H1 (cell line): ENCODE measurements at regions of chr4 and their contacts with region 1.

Region 1: DNA sequence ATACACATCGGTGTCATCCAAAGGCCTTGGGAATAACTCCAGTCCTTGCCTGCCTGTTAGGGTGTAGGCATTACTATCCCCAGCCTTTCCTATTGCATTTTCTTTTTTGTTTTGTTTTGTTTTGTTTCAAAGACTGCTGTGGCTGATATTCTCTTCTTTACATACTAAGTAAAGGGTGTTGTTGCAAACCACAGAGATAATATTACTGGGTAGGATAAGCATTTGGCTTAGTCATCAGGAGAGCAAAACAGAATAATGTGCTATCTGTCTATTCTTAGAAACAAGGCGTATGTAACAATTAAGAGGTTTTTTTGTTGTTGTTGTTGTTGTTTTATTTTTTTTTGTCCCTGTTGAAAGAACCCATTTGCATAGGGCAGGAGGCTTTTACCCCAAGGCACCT is 41.8 kb downstream of the UGT2B28 start:
- DNase-seq: no peak
- H3K4me3 ChIP-seq: no peak overlapping the region
- H3K27ac ChIP-seq: no peak overlapping the region
- H3K4me1 ChIP-seq: no peaks in the 10 kb centered on the region
- H3K27me3 ChIP-seq: no peaks in the 10 kb centered on the region
- CTCF ChIP-seq: no peak
- EP300 ChIP-seq: no peak
- POLR2A ChIP-seq: no peak
- RAD21 ChIP-seq: no peak

Region 2: GRCh38 chr4:69167300-69167699 is 154.8 kb before region 1 on chr4:
- CTCF ChIA-PET with region 1: no interaction called
- POLR2A ChIA-PET with region 1: no interaction called
- DNase-seq: no peak
- H3K4me3 ChIP-seq: no peak overlapping the region
- H3K27ac ChIP-seq: no peak overlapping the region
- H3K4me1 ChIP-seq: no peaks in the 10 kb centered on the region
- H3K27me3 ChIP-seq: no peaks in the 10 kb centered on the region
- CTCF ChIP-seq: no peak
- EP300 ChIP-seq: no peak
- POLR2A ChIP-seq: no peak
- RAD21 ChIP-seq: no peak

Region 3: DNA sequence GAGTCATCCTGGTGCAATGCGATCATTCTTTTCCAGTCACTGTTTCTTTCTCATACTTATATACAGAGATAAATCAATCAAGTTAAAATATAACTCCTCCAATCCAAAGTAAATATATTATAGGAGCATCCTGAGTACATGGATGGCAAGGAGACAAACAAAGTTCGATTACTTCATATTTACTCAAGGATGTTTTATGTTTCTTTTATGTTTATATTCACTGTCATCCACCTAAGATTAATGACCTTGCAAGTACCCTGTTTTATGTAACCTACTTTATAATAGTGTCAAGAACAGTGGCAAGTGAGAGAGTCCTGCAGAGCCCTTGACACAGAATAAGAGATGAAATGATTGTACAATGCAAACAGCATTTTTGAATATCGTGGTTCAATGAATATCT is 107.3 kb before region 1 on chr4 and contains the start of gene UGT2B11:
- CTCF ChIA-PET with region 1: no interaction called
- POLR2A ChIA-PET with region 1: no interaction called
- DNase-seq: no peak
- H3K4me3 ChIP-seq: no peak within 1 kb of the TSS
- H3K27ac ChIP-seq: no peak within 1 kb of the TSS
- H3K4me1 ChIP-seq: no peaks in the 10 kb centered on the region
- H3K27me3 ChIP-seq: no peaks in the 10 kb centered on the region
- CTCF ChIP-seq: no peak
- EP300 ChIP-seq: no peak
- POLR2A ChIP-seq: no peak
- RAD21 ChIP-seq: no peak
- total RNA-seq, gene UGT2B11: not detected in 2 replicates

Region 4: GRCh38 chr4:69617083-69617694 is 295.1 kb after region 1 on chr4:
- CTCF ChIA-PET with region 1: interaction called, 24 read pairs
- POLR2A ChIA-PET with region 1: no interaction called
- DNase-seq: no peak
- H3K4me3 ChIP-seq: no peak overlapping the region
- H3K27ac ChIP-seq: no peak overlapping the region
- H3K4me1 ChIP-seq: no peaks in the 10 kb centered on the region
- H3K27me3 ChIP-seq: no peaks in the 10 kb centered on the region
- CTCF ChIP-seq: peak in 2 of 3 experiments; percentile 35 to 52; a peak in 2 of 4 replicates
- EP300 ChIP-seq: no peak
- POLR2A ChIP-seq: no peak
- RAD21 ChIP-seq: peak; percentile 81 to 90